Right ventricle myocardium superior (tissue), 1 donor: ENCODE measurements at regions of chr16 and their contacts with region 1.

Region 1: DNA sequence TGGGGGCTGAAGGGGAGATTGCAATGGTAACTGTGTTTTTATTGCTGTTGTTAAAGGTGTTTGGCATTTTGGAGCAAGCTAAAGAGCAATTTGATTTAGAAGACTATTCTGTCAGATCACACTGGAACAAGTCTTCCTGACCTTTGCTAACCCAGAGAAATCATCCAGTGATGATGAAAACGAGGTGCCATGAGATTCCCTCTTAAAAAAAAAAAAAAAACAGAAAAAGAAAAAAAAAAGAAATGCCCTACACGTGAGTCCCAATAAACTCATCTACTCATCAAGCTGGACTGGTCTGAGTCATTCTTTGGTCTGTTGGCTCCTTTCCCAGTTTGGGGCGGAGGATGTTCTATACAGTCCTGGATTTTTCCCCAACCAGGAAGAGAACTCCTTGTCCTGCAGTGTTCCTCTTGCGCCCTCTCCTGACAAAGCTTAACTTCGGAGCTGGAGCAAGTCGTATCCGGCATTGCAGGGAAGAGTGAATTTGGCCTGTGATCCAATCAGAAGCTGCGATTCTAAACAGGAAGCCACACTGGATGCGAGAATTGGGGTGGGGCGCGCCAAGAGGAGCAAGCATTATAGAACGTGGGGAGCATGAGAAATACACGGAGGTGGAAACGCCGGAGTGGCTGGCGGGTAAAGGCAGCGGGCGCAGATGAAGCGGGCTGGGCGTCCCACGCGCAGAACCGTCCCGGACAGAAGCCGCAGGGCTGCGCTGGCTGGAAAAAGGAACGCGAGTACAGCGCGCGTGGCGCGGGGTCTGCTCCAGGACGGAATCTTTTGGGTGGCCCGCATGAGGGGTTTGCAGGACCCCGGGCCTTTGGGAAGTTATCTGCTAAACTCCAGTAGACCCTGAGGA is 22.4 kb upstream of the CRYM start:
- DNase-seq: peak; percentile 87
- ATAC-seq: peak; percentile 96

Region 2: DNA sequence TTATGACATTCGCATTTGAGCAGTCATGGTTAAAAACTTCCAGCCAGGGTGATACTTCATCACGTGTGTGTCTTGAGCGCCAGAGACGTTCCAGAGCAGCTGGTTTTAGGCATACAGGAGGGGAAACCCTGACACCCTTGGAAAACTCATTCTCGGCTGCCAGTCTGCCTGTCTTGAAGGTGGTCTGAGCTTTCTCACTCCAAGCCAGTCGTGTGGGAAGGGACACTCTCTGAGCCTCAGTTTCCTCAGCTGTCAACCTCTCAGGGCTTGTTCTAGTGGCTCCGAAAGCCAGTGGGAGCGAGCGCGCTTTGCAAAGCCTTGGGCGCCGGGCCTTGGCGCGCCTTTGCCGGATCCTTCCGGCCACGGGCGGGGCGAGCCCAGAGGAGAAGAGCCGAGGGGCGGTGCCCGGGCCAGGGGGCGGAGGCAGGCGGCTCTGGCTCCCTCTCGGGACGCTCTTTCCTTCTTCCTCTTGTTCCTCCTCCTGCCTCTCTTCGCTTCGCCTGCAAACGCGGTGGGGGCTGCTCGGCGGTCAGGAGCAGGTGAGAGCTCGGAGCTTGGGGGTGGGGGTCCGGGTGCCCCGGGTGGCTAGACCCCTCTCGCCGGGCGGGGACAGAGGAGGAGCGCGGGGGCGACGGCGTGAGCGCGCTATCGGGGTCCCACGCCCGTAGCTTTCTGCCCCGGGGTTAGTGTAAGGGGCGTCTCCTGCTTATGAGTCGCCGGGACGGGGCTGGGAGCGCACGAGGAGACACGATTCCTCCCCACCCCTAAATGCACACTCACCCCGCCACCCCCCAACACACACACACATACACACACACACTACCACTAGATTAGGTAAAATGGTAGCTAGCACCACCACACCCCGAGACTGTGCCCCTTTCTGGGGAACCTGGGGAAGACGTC is 142.1 kb before region 1 on chr16 and contains the start of gene LDAF1:
- intact Hi-C with region 1: loop called (anchors 2 kb)
- DNase-seq: peak; percentile 93
- ATAC-seq: peak; percentile 92
- total RNA-seq, gene LDAF1: 148 TPM

Region 3: GRCh38 chr16:21184834-21185233 is 115.7 kb before region 1 on chr16:
- intact Hi-C with region 1: loop called (anchors 2 kb)
- DNase-seq: no peak
- ATAC-seq: no peak

Region 4: DNA sequence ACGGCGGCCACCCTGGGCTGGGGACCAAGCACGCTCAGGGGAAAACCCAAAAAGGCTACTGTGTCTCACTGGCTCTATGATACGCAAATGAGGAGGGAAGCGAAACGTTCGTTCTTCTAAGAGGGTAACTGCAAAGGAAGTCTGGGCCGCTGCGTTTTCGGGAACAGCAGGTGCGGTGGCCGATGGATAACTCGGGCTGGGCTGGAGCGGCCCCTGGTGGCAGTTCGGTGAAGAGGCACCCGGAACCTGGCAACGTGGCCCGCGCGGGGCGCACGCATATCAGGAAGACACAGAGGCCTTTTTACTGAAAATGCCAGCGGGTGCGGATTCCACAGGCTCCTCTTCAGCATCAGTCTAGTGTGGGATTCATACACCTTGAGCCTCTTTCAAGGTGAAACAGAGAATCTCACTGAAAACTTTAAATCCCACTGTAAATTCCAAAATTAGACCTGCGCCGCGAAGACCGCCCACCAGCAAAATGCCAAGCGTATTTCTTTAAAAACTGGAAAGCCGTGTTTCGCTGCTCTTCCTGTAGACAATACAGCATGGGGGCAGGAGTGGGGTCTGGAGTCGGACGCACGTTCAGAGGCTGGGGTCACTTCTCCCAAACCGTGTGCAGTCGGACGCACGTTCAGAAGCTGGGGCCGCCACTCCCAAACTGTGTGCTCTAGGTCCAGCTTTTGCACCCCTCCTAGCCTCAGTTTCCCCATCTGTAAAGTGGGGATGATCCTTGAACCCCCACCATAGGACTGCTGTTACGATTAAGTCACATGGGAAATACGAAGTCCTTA is 254.5 kb after region 1 on chr16:
- intact Hi-C with region 1: loop called (anchors 10 kb)
- DNase-seq: peak; percentile 94
- ATAC-seq: peak; percentile 88